ENCODE measurements at regions of chr17 and their contacts with region 1.

Region 1: GRCh38 chr17:66248285-66248684 is 19.1 kb upstream of the APOH start:
- DNase-seq: no peak
- ATAC-seq: no peak
- H3K4me3 ChIP-seq: no peak overlapping the region
- H3K4me3 Mint-ChIP-seq: no peak overlapping the region
- H3K27ac ChIP-seq: no peak overlapping the region
- H3K27ac Mint-ChIP-seq: peak overlapping the region in 1 of 2 donors; percentile 49
- H3K4me1 ChIP-seq: peaks cover 25 to 31% of the 10 kb centered on the region in 2 experiments
- H3K4me1 Mint-ChIP-seq: peaks cover 30 to 38% (median 31%) of the 10 kb centered on the region in 3 donors
- H3K27me3 ChIP-seq: no peaks in the 10 kb centered on the region
- H3K27me3 Mint-ChIP-seq: no peaks in the 10 kb centered on the region

Region 2: DNA sequence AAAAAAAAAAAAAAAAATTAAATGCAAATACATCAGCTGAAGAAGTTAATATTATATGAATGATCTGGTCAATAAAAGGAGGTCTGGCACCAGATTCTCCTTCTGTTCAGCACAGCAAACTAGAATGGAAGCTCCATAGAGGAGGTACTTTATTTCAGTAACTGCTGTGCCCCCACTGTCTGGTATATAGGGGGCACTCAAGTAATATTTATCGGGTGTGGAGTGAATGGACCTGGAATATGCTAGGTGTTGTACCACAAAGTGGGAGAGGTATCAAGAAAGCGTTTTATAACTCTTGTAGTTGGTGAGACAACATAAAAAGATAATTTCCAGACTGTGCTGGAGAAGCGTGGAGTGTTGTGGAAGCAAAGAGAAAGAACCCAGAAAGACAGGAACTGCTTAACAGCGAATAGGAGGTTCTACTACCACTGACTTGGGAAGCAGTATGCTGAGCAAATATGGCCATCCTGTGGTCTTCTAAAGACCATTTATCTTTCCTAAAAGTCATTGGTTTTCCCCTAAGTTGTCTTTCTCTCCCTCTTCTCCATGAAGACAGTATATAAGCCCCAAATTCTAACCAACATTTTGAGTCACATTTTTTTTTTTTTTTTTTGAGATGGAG is 41.9 kb after region 1 on chr17:
- CTCF ChIA-PET with region 1: no interaction called
- POLR2A ChIA-PET with region 1: no interaction called
- DNase-seq: peak in 1 of 35 experiments; percentile 27
- ATAC-seq: peak in 1 of 4 experiments; percentile 31
- H3K4me3 ChIP-seq: no peak overlapping the region
- H3K4me3 Mint-ChIP-seq: no peak overlapping the region
- H3K27ac ChIP-seq: no peak overlapping the region
- H3K27ac Mint-ChIP-seq: no peak overlapping the region
- H3K4me1 ChIP-seq: peaks cover 17 to 25% of the 10 kb centered on the region in 2 experiments
- H3K4me1 Mint-ChIP-seq: peaks cover 34 to 43% (median 38%) of the 10 kb centered on the region in 3 donors
- H3K27me3 ChIP-seq: no peaks in the 10 kb centered on the region
- H3K27me3 Mint-ChIP-seq: no peaks in the 10 kb centered on the region

Region 3: GRCh38 chr17:66580184-66580955 is 332.1 kb after region 1 on chr17:
- CTCF ChIA-PET with region 1: interaction called in 1 of 2 experiments, 10 read pairs
- POLR2A ChIA-PET with region 1: no interaction called
- DNase-seq: no peak
- ATAC-seq: no peak
- H3K4me3 ChIP-seq: no peak overlapping the region
- H3K4me3 Mint-ChIP-seq: no peak overlapping the region
- H3K27ac ChIP-seq: no peak overlapping the region
- H3K27ac Mint-ChIP-seq: no peak overlapping the region
- H3K4me1 ChIP-seq: peaks cover 0 to 4% of the 10 kb centered on the region in 2 experiments
- H3K4me1 Mint-ChIP-seq: peaks cover 43 to 50% (median 44%) of the 10 kb centered on the region in 3 donors
- H3K27me3 ChIP-seq: no peaks in the 10 kb centered on the region
- H3K27me3 Mint-ChIP-seq: no peaks in the 10 kb centered on the region

Region 4: DNA sequence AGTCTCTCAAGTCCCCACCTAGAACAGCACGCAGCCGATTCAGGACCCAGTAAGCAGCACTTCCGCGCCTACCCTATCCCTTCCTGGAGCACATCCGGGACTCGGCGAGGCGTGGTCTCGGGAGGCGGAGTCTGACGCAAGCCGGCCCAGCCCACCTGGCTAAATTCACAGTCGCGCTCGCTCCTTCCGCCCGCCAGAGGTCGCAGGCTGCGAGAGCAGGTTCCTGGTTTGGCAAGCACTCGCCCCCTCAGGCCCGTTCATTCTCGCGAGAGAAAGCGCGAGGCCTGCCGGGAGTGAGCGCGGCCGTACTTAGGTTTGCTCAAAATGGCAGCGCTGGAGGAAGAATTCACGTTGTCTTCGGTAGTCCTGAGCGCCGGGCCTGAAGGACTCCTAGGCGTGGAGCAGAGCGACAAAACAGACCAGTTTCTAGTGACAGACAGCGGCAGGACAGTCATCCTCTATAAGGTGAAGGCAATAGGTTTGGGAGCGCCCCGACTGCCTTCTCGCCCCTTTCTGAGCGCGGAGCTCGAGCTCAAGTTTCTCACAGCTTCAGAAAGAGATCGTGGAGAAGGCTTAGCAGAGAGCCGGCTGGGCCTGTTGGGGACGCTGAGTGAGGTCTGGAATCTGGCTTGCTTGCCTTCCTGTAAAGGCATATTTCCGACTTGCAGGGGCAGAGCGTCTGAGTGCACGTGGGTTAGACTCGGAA is 1469.5 kb after region 1 on chr17 and contains the start of gene NOL11:
- CTCF ChIA-PET with region 1: no interaction called
- POLR2A ChIA-PET with region 1: interaction called in 1 of 2 experiments, 11 read pairs
- DNase-seq: peak; percentile 98 to 100 (median 99)
- ATAC-seq: peak; percentile 92 to 97 (median 94)
- H3K4me3 ChIP-seq: peak within 1 kb of the TSS; percentile 76 to 98
- H3K4me3 Mint-ChIP-seq: peak within 1 kb of the TSS; percentile 97 to 99 (median 98)
- H3K27ac ChIP-seq: peak within 1 kb of the TSS; percentile 90
- H3K27ac Mint-ChIP-seq: peak within 1 kb of the TSS; percentile 98
- H3K4me1 ChIP-seq: peaks cover 14 to 24% of the 10 kb centered on the region in 2 experiments
- H3K4me1 Mint-ChIP-seq: peaks cover 23 to 42% (median 36%) of the 10 kb centered on the region in 3 donors
- H3K27me3 ChIP-seq: no peaks in the 10 kb centered on the region
- H3K27me3 Mint-ChIP-seq: peaks cover 0 to 3% of the 10 kb centered on the region in 2 donors
- total RNA-seq, gene NOL11: 52.0 to 69.0 (median 58.8) TPM

Measured in T-cell (primary cell).